ENCODE measurements at regions of chr2 and their contacts with region 1.

Region 1: GRCh38 chr2:44479122-44479887 is 117.6 kb downstream of the CAMKMT start:
- DNase-seq: peak; percentile 71
- H3K4me3 ChIP-seq: no peak overlapping the region
- H3K27ac ChIP-seq: no peak overlapping the region
- H3K27me3 ChIP-seq: no peaks in the 10 kb centered on the region
- CTCF ChIP-seq: peak; percentile 100

Region 2: GRCh38 chr2:43927442-43927841 is 551.9 kb before region 1 on chr2:
- CTCF ChIA-PET with region 1: no interaction called
- POLR2A ChIA-PET with region 1: no interaction called
- DNase-seq: no peak
- H3K4me3 ChIP-seq: no peak overlapping the region
- H3K27ac ChIP-seq: no peak overlapping the region
- H3K27me3 ChIP-seq: no peaks in the 10 kb centered on the region
- CTCF ChIP-seq: no peak

Region 3: DNA sequence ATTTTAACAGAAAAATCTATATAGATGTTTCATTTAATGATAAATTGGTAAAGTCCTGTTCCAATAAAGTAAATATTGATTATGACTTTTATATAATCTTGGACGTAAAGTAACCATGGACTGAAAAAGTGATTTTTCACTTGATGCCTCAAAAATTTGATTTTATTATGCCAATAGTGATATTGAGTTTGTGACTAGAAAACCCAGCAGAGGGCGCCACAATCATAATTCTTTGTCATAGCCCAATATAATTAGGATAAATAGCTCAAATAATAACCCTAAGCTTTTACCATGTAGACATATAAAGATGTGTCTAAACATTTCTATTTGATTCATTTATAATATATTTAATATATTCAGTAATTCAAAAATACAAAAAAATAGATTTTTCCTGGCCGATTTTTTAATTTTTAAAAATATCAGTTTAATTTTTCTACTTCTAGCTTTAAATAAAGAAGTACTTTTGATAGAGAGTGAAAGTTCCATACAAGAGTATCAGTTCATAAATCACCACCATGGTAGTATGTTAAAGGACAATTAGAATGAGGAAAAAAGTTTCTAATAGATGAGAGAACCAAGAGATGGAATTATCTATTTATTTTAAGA is 86.9 kb before region 1 on chr2:
- CTCF ChIA-PET with region 1: interaction called, 136 read pairs
- POLR2A ChIA-PET with region 1: interaction called, 6 read pairs
- DNase-seq: no peak
- H3K4me3 ChIP-seq: no peak overlapping the region
- H3K27ac ChIP-seq: no peak overlapping the region
- H3K27me3 ChIP-seq: no peaks in the 10 kb centered on the region
- CTCF ChIP-seq: peak; percentile 68

Region 4: DNA sequence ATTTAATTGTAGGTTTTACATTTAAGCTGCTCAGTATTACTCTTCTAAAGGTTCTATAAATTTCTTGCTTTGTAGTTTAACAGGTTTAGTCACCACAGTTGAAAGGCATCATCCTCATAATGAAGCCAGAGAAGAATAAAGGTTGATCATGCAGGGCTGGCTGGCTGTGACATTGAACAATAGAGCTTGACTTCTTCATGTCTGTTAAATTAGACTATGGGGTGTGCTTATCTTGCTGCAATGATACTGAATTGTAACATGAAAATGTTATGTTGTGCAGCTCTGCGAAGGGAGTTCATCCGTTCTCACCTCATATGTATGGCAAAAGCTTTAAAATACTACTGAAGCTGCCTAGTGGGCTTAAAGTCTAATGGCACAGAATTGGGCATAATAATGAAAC is 35.8 kb before region 1 on chr2:
- CTCF ChIA-PET with region 1: interaction called, 19 read pairs
- POLR2A ChIA-PET with region 1: no interaction called
- DNase-seq: no peak
- H3K4me3 ChIP-seq: no peak overlapping the region
- H3K27ac ChIP-seq: no peak overlapping the region
- H3K27me3 ChIP-seq: no peaks in the 10 kb centered on the region
- CTCF ChIP-seq: no peak

Region 5: GRCh38 chr2:44490726-44491125 is 11.4 kb after region 1 on chr2:
- CTCF ChIA-PET with region 1: interaction called, 114 read pairs
- POLR2A ChIA-PET with region 1: no interaction called
- DNase-seq: no peak
- H3K4me3 ChIP-seq: no peak overlapping the region
- H3K27ac ChIP-seq: no peak overlapping the region
- H3K27me3 ChIP-seq: no peaks in the 10 kb centered on the region
- CTCF ChIP-seq: no peak

Region 6: GRCh38 chr2:44543773-44544725 is 64.7 kb after region 1 on chr2:
- CTCF ChIA-PET with region 1: interaction called, 10 read pairs
- POLR2A ChIA-PET with region 1: no interaction called
- DNase-seq: no peak
- H3K4me3 ChIP-seq: no peak overlapping the region
- H3K27ac ChIP-seq: no peak overlapping the region
- H3K27me3 ChIP-seq: no peaks in the 10 kb centered on the region
- CTCF ChIP-seq: no peak

Region 7: DNA sequence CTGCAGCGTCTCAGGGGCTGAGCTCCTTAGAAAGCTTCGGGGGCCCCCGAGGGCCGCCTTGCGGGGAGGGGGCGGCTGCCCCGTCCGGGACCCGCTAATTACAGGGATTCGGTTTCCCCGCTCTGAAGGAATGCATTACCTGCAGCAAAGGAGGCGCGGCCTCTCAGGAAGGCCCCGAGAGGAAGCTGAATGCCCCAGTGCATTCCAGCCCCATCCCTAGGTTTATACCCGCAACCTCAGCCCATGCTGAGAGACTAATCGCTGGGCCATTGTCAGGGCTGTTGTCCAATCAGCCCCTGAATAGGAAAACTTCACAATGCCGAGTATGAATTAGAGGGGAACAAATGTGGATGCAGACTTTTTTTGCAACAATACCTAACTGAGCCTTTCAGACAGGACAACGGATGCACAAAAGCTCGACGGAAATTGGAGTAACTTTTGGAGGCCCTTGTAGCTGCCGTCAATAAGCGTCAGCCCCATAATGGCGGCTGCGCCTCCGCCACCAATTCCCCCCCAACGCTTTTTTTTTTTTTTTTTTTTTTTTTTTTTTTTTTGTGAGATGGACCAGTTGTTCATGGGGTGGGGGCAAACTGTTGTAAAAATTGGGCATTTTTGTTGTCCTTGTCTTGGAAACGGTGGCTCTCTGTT is 323.6 kb after region 1 on chr2:
- CTCF ChIA-PET with region 1: interaction called, 14 read pairs
- POLR2A ChIA-PET with region 1: no interaction called
- DNase-seq: no peak
- H3K4me3 ChIP-seq: no peak overlapping the region
- H3K27ac ChIP-seq: no peak overlapping the region
- H3K27me3 ChIP-seq: peaks cover 85% of the 10 kb centered on the region
- CTCF ChIP-seq: no peak

Region 8: GRCh38 chr2:45422921-45423320 is 943.6 kb after region 1 on chr2:
- CTCF ChIA-PET with region 1: no interaction called
- POLR2A ChIA-PET with region 1: no interaction called
- DNase-seq: no peak
- H3K4me3 ChIP-seq: no peak overlapping the region
- H3K27ac ChIP-seq: no peak overlapping the region
- H3K27me3 ChIP-seq: no peaks in the 10 kb centered on the region
- CTCF ChIP-seq: no peak

Measured in AG04450 (cell line).